HAP-1 (cell line): ENCODE measurements at regions of chr13 and their contacts with region 1.

Region 1: DNA sequence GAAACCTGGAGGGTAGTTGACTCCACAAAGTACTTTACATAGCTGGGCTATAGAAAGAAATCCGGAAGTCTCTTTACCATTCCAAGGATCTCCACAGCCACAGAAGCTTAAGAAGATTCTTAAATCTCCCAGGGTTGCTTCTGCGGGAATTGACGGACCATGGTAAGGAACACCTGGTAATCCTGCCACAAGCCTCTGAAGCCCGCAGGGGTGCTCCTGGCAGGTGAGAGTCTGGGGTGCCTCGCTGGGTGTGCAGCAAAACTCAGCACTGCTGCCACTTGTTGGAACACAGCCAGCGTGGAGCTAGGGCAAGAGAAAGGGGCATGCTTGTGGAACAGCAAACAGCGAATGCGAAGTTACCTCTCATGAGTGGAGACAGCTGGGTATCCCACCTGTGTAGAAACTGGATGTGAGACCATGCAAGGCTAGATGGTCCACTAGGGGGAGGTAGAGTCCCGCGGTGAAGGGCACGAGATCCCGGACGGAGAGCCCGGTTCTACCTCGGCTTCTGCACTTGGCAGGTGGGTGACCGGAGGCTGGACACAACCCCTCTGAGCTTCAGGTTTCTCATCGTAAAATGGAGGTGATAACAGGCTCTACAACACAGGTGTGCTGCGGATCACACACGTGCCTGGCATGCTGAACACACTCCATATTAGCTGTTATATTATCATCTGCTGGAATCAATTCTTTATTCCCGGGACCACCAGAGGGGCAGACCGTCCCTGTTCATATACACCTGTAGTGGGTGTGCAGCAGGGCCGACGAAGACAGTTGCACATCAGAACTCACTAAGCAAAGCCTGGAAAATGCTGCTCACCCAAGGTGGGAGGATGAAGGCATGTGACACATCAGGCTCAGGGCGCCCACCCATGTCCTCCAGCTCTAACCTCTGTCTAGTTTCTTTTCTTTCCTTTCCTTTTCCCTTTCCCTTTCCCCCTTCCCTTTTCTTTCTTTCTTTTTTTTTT is 24.1 kb upstream of the UBAC2 start:
- DNase-seq: peak; percentile 42 to 91
- H3K4me3 ChIP-seq: no peak overlapping the region
- H3K4me1 ChIP-seq: peaks cover 3% of the 10 kb centered on the region; the same call in 1 of the 2 replicates
- H3K27me3 ChIP-seq: peaks cover 2% of the 10 kb centered on the region; the same call in 1 of the 2 replicates

Region 2: DNA sequence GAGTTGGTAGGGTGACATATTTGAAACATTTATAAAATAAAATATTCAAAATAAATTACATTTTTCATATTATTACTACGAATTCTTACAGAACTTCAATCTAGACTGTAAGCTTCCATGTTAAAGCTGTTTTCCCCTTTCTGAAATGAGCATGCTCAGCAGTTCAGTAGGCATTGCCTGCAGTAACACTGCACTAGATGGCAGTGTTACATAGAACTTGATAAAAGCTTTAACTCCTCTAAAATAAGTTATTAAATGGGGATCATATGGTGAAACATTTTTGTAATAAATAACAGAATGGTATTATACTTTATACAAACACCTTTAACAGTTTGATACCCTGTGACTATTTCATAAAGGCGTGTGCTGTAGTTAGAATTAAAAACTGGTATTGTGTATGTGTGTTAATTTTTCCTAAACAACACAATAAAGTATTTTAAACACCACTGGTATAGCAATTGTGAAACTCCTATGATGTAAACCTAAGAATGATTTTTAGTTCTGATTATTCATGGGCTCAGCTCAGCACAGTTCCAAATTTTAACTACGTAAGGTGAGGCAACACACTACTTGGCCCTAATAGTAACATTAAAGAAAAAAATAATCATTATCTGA is 93.1 kb after region 1 on chr13:
- in situ Hi-C with region 1: loop called (anchors 5 kb)
- DNase-seq: no peak
- H3K4me3 ChIP-seq: no peak overlapping the region
- H3K4me1 ChIP-seq: no peaks in the 10 kb centered on the region
- H3K27me3 ChIP-seq: no peaks in the 10 kb centered on the region

Region 3: DNA sequence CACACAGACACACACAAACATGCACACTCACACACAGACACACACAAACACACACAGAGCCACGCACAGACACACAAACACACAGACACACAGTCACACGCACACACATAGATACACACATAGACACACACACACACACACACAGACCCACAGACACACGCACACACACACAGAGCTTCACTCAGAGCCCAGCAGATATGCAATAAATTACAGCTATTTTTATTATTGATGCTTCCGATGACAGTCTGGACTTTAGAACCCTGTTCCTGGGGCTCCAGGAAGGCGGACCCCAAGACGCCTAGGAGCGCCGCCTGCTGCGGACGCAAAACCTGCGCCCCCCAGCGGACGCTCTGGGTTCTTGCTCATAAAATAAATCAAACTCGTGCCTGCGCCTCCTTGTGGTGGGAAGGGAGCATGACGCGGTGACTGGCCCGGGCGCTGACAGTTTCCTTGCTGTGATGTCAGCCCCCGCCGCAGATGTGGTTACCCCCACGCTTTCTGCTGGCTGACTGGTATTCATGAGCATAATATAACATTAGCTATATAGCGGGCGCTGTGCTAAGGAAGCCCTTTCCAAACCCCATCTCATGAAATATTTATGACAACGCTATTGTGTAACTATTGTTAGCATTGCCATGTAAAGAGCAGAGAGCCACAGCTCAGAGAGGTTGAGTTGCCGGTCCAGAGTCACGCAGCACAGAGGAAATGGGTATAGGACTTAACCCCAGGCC is 260.3 kb after region 1 on chr13:
- in situ Hi-C with region 1: loop called (anchors 5 kb)
- DNase-seq: peak; percentile 67 to 88
- H3K4me3 ChIP-seq: no peak overlapping the region; the same call in 1 of the 2 replicates
- H3K4me1 ChIP-seq: peaks cover 8% of the 10 kb centered on the region
- H3K27me3 ChIP-seq: no peaks in the 10 kb centered on the region

Region 4: GRCh38 chr13:100962585-100962984 is 1786.0 kb after region 1 on chr13:
- in situ Hi-C with region 1: no loop called
- DNase-seq: no peak
- H3K4me3 ChIP-seq: no peak overlapping the region
- H3K4me1 ChIP-seq: no peaks in the 10 kb centered on the region
- H3K27me3 ChIP-seq: no peaks in the 10 kb centered on the region